Esophagus muscularis mucosa (tissue), 4 donors: ENCODE measurements at regions of chr1 and their contacts with region 1.

Region 1: GRCh38 chr1:87292684-87293493 is 35.8 kb upstream of the LMO4 start:
- DNase-seq: no peak
- H3K4me3 ChIP-seq: no peak overlapping the region
- H3K27ac ChIP-seq: no peak overlapping the region
- H3K4me1 ChIP-seq: no peaks in the 10 kb centered on the region
- H3K27me3 ChIP-seq: no peaks in the 10 kb centered on the region
- CTCF ChIP-seq: peak; percentile 72 to 77 (median 74)
- EP300 ChIP-seq: no peak
- POLR2A ChIP-seq: no peak

Region 2: GRCh38 chr1:87131809-87132283 is 161.0 kb before region 1 on chr1:
- intact Hi-C with region 1: loop called (anchors 5 kb)
- DNase-seq: no peak
- H3K4me3 ChIP-seq: peak overlapping the region; percentile 45 to 62 (median 55)
- H3K27ac ChIP-seq: peak overlapping the region in 3 of 4 donors; percentile 58 to 59 (median 58)
- H3K4me1 ChIP-seq: peaks cover 5 to 42% (median 36%) of the 10 kb centered on the region in 4 donors
- H3K27me3 ChIP-seq: no peaks in the 10 kb centered on the region
- CTCF ChIP-seq: peak; percentile 80 to 96 (median 89)
- EP300 ChIP-seq: no peak
- POLR2A ChIP-seq: no peak

Region 3: DNA sequence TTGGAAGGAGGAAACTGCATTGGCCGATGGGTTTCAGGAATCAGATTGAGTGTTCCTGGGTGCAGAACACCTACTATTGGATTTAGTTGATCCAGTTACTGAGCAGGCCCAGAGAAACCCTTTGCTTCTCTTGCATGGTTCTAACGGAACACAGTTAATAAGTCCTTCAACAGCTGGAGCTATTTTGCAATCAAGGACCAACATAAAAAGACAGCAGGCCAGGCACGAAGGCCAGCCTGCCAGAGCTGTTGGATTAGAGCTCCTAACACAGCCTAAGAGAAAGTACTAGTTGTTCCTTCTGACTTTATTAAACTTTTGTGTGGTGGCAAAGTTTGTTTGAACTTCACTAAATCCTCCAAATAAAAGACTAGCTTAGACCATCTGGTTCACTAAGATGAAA is 112.2 kb before region 1 on chr1:
- intact Hi-C with region 1: no loop called
- DNase-seq: no peak
- H3K4me3 ChIP-seq: no peak overlapping the region
- H3K27ac ChIP-seq: no peak overlapping the region
- H3K4me1 ChIP-seq: no peaks in the 10 kb centered on the region
- H3K27me3 ChIP-seq: no peaks in the 10 kb centered on the region
- CTCF ChIP-seq: no peak
- EP300 ChIP-seq: no peak
- POLR2A ChIP-seq: no peak